Activated naive CD4-positive, alpha-beta T cell treated with anti-CD3 and anti-CD28 coated beads for 36 hours (primary cell): ENCODE measurements at regions of chr1 and their contacts with region 1.

Region 1: DNA sequence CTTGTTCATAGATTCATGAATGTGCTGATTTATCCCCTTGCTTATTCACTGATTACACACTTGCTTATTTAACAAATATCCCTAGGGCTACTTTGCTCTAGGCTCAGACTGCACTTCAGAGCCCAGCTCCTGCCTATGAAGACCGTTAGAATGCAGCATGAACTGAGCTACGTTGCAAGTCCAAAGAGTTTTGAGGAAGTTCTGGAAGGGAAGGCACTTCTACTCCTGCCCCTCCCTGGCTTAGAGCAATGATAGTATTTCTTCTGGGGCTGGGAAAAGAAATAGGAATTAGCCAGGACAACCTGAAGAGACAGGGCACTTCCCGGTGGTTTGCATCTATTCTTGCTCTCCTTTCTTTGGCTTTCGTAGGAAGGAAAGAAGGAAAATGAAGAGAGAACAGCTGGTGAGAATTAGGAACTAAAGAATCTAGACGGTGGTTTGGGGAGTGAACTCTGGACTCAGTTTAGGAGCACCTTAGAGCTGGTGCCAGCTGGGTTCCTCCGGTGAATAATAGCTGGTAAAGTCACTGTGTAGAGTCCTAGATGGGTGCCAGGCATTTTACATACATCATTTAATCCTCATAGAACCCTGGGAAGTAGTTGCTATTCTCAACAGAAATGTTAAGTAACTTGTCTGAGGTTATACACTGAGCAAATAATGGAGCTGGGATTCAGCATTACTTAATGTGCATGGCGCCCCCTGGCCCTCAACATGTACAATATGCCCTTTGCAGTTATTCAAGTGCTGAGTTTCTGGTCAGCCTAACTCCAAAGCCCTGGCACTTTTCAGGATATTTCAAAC is 65.9 kb downstream of the NDUFS5 start:
- DNase-seq: peak; percentile 83
- H3K4me3 Mint-ChIP-seq: no peak overlapping the region
- H3K27ac Mint-ChIP-seq: no peak overlapping the region
- H3K4me1 Mint-ChIP-seq: peaks cover 4% of the 10 kb centered on the region
- H3K27me3 Mint-ChIP-seq: no peaks in the 10 kb centered on the region

Region 2: GRCh38 chr1:38846210-38846609 is 245.8 kb before region 1 on chr1:
- CTCF ChIA-PET with region 1: interaction called, 5 read pairs
- intact Hi-C with region 1: loop called (anchors 1 kb)
- DNase-seq: peak; percentile 17
- H3K4me3 Mint-ChIP-seq: no peak overlapping the region
- H3K27ac Mint-ChIP-seq: no peak overlapping the region
- H3K4me1 Mint-ChIP-seq: peaks cover 7% of the 10 kb centered on the region
- H3K27me3 Mint-ChIP-seq: no peaks in the 10 kb centered on the region

Region 3: DNA sequence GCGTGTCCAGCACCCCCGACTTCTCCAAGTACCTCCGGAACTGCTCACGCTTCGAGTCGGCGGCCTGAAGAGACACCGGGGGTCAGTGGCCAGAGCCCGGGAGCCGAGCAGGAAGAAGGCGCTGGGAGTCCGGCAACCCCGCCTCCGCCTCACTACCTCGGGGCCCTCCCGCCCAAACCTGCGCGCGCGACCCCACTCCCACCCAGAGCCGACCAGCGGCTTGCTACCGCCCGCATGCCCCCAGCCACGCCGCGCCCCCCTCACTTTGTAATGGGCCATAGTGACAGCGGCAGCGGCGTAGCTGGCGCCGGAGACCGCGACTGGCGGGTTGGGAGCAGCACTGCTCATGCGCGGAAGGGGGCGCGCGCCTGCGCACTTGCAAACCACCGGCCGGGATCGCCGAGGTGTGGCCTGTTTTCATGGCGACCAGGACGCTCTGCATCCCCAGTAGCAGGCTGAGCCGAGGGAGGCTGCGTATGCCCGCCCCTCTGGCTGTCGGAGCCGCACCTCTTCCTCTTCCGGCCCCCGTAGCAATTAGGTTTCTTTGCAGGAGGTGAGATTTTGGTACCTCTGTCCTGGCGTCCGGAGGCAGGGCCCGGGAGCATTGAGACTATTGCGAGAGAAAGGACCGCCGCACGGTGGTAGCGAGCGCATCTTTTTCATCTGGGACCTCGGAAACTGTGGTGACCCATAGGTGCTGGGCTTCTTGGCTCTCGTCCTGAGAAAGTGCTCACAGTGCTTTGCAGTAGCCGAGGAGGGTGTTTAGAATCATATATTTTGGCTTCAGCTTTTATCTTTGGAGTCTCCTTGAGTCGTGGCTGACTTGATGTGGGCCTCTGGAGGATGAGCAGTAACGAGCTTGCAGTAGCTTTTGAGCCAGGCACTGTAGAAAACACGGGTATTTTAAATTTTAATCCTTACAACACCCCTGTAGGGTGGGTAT is 218.7 kb before region 1 on chr1 and contains the start of gene MYCBP:
- CTCF ChIA-PET with region 1: interaction called, 11 read pairs
- intact Hi-C with region 1: no loop called
- DNase-seq: peak; percentile 97
- H3K4me3 Mint-ChIP-seq: peak within 1 kb of the TSS; percentile 86
- H3K27ac Mint-ChIP-seq: peak within 1 kb of the TSS; percentile 57
- H3K4me1 Mint-ChIP-seq: peaks cover 19% of the 10 kb centered on the region
- H3K27me3 Mint-ChIP-seq: no peaks in the 10 kb centered on the region
- total RNA-seq, gene MYCBP: 54.6 to 58.0 TPM

Region 4: DNA sequence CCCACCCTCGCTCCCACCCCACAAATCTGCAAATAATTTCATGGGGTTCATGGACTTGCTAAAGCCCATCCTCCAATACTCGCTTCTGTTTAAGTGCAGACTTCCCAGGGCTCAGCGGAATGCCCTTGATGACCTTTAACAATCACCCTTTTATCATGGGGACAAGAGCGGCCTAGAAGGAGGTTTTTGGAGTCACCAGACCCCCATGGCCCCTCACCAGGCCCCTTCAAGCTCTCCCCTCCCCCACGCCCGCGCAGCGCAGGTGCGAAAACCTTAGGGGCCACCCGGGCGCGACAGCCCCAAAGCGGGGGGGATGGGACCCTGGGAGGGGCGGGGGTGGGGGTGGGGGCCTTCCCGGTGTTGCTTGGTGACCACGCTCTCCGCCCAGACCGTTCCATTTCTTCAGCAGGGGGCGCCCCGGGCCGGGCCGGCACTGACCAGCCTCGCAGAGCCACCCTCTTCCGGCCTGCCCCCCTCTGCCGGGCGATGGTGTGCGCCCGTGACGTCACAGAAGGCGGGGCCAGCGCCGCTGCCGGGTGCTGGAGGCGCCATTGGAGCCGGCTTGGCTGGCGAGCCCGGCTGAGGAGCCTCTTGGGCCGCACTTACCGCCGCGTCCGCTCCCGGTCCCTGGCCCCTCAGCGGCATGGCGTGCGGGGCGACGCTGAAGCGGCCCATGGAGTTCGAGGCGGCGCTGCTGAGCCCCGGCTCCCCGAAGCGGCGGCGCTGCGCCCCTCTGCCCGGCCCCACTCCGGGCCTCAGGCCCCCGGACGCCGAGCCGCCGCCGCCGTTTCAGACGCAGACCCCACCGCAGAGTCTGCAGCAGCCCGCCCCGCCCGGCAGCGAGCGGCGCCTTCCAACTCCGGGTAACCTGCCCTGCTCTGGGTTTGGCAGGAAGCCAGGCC is 101.1 kb before region 1 on chr1 and contains the start of gene AKIRIN1:
- CTCF ChIA-PET with region 1: interaction called, 4 read pairs
- intact Hi-C with region 1: loop called (anchors 2 kb)
- DNase-seq: peak; percentile 97
- H3K4me3 Mint-ChIP-seq: peak within 1 kb of the TSS; percentile 80
- H3K27ac Mint-ChIP-seq: peak within 1 kb of the TSS; percentile 84
- H3K4me1 Mint-ChIP-seq: peaks cover 52% of the 10 kb centered on the region
- H3K27me3 Mint-ChIP-seq: no peaks in the 10 kb centered on the region
- total RNA-seq, gene AKIRIN1: 58.1 to 58.5 TPM

Region 5: DNA sequence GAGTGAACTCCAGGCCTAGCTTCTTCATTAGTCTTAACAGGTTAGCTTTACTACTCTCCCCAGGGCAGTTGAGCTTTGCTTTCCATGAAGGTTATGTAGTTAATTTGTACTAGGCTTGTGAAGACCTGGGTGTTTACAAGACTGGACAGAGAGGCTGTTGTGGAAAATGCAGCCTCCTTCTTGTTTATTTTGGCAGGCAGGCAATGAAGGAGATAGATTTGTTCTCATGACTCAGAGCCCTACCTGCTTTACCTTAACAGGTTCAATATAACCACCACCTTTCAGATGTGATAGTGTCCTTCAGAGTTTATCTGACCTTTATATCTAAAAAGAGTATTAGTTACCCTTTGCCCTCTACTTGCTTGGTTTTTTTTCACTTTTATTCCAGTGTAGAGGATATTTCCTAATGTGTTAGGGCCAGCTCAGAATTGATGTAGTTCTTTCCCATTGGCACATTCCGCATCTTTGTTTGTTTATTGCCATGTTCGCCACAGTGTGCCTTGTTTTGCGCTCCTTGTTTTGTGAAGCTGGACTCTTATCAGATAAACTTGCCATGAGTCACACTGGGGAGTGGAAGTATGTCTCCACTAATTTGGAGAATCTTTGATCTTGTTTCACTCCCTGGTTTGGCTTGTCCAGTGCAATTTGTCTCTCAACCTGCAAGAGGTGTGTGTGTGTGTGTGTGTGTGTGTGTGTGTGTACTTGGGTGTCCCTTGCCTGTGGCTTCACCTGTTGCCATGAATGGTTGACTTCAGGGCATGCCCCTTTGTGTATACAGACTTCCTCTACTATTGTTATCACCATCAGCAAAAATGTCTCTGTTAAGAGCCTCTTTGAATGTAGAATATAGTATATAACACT is 25.1 kb after region 1 on chr1:
- CTCF ChIA-PET with region 1: no interaction called
- intact Hi-C with region 1: no loop called
- DNase-seq: no peak
- H3K4me3 Mint-ChIP-seq: no peak overlapping the region
- H3K27ac Mint-ChIP-seq: no peak overlapping the region
- H3K4me1 Mint-ChIP-seq: no peaks in the 10 kb centered on the region
- H3K27me3 Mint-ChIP-seq: peaks cover 2% of the 10 kb centered on the region

Region 6: GRCh38 chr1:39170731-39171667 is 79.0 kb after region 1 on chr1:
- CTCF ChIA-PET with region 1: no interaction called
- intact Hi-C with region 1: no loop called
- DNase-seq: no peak
- H3K4me3 Mint-ChIP-seq: no peak overlapping the region
- H3K27ac Mint-ChIP-seq: no peak overlapping the region
- H3K4me1 Mint-ChIP-seq: no peaks in the 10 kb centered on the region
- H3K27me3 Mint-ChIP-seq: no peaks in the 10 kb centered on the region